Left cardiac atrium (tissue), 4 donors: ENCODE measurements at regions of chr15 and their contacts with region 1.

Region 1: GRCh38 chr15:69058830-69059556 is 44.5 kb downstream of the NOX5 start:
- DNase-seq: peak; percentile 92
- ATAC-seq: peak; percentile 82 to 87

Region 2: GRCh38 chr15:69225355-69226025 is 166.5 kb after region 1 on chr15:
- intact Hi-C with region 1: loop called (anchors 2 to 5 kb)
- DNase-seq: no peak
- ATAC-seq: no peak

Region 3: GRCh38 chr15:69265347-69265955 is 206.5 kb after region 1 on chr15:
- intact Hi-C with region 1: loop called (anchors 2 to 10 kb)
- DNase-seq: no peak
- ATAC-seq: no peak

Region 4: DNA sequence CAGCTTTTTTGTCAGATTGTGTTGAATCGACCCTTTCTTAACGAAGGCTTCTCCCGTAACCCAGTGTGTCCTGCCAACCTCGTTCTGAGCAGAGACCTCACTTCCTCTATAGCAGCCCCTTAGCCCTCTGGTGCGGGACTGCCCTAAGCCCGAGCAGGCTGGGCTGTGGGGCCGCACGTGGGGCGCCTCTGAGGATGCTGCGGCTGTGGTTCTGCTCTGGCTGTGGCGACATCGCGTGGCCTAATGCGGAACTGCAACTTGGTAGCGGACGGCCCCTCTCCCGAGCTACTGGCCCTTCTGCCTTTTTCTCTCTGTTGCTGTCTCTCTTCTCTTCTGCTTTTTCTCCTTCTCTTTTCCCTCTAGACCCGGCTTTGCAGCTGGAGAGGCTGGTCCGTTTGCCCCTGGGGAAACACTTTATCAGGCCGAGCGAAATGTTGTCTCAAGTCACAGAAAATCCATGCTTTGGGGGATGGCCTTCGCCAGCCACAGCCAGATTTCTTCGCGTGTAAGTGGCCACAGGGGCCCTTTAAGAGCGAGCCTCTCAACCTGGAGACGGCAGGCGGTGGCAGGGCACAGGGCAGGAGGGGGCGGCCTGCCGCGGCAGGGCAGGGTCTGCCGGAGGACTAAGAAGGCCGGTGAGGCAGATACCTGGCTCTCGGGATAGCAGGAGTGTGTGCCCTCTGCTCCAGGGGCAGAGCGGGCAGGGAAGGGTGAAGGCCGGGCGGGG is 335.7 kb after region 1 on chr15:
- intact Hi-C with region 1: loop called (anchors 1 to 5 kb)
- DNase-seq: peak; percentile 85
- ATAC-seq: peak; percentile 90 to 92